PC-3 (cell line): ENCODE measurements at regions of chr17 and their contacts with region 1.

Region 1: DNA sequence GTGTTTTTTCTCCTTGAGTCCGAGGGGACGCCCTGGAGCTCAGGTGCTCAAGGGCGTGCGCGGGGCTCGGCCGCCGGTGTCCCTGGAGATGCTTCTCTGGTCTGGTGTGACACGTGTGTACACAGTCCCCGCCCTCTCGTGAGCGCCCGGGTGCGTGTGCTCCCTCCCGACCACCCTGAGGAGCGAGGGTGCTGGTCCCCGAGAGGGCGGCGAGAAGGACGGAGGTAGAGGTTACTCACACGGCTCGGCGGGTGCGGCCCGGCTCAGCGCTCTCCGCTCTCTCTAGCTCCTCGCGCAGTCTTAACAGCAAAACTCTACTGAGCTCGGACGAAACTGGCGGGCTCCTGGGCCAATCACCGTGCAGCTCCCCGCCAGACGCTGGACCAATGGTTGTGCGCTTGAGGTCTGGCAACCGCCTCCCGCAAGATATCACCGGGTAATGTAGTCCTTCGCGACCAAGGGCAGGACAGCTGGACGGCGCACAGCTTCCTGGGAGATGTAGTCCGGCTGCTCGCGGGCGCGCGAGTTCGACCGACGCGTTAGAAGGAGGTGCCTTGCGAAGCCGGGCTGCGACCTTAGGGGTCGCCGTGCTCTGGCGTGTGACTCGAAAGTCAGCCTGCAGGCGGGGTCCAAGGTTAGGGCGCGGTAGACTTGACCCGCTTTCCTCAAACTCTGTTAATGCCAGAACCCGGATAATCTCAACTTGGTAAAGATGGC is at the start of gene SLC25A19:
- DNase-seq: peak; percentile 99
- ATAC-seq: peak; percentile 97
- H3K4me3 ChIP-seq: peak within 1 kb of the TSS; percentile 82
- H3K27ac ChIP-seq: peak within 1 kb of the TSS; percentile 68
- H3K4me1 ChIP-seq: peaks cover 12% of the 10 kb centered on the region
- H3K27me3 ChIP-seq: no peaks in the 10 kb centered on the region
- CTCF ChIP-seq: no peak
- total RNA-seq, gene SLC25A19: 75.0 and 76.9 TPM in 2 replicates

Region 2: DNA sequence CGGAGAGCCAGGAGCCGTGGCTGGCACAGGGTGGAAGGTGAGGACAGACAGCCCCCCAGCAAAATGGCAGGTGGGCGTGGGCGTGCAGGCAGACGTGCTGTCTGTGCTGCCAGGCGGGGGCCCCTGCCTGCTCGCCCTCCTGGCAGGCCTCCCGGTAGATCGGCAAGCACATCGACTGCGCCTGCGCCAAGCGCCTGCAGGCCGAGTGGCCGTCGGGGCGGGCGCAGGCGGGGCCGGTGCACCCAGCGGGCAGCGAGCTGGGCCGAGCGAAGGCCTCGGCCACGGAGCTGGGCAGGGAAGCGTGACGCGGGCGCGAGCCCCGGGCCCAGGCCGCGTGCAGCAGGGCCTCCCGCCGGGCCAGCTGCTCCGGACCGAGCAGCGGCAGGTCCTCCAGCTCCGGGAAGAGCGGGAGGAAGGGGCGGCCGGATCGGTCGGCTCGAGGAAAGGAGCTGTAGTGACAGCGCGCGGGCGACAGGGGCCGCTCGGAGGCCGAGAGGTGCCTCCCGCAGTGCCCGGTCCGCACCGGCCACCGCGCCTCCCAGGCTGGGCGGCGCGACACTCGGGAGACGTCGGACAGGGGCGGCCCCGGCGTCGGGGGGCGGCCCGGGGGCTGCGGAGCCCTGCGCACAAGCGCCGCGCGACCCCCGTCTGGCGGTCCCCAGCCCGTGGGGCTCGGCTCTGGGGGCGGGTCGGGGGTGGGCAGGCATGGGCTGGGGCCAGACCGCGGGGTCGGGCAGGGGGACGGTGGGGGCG is 446.5 kb before region 1 on chr17:
- CTCF ChIA-PET with region 1: no interaction called
- POLR2A ChIA-PET with region 1: no interaction called
- intact Hi-C with region 1: no loop called
- DNase-seq: peak; percentile 82
- ATAC-seq: peak; percentile 90
- H3K4me3 ChIP-seq: peak overlapping the region; percentile 71
- H3K27ac ChIP-seq: no peak overlapping the region
- H3K4me1 ChIP-seq: peaks cover 6% of the 10 kb centered on the region; the same call in 1 of the 2 replicates
- H3K27me3 ChIP-seq: no peaks in the 10 kb centered on the region
- CTCF ChIP-seq: peak; percentile 61

Region 3: GRCh38 chr17:75159191-75160031 is 129.9 kb before region 1 on chr17:
- CTCF ChIA-PET with region 1: no interaction called
- POLR2A ChIA-PET with region 1: no interaction called
- intact Hi-C with region 1: no loop called
- DNase-seq: peak; percentile 98
- ATAC-seq: peak; percentile 64
- H3K4me3 ChIP-seq: peak overlapping the region; percentile 16; the same call in 1 of the 2 replicates
- H3K27ac ChIP-seq: peak overlapping the region; percentile 96
- H3K4me1 ChIP-seq: peaks cover 47% of the 10 kb centered on the region
- H3K27me3 ChIP-seq: no peaks in the 10 kb centered on the region
- CTCF ChIP-seq: no peak

Region 4: DNA sequence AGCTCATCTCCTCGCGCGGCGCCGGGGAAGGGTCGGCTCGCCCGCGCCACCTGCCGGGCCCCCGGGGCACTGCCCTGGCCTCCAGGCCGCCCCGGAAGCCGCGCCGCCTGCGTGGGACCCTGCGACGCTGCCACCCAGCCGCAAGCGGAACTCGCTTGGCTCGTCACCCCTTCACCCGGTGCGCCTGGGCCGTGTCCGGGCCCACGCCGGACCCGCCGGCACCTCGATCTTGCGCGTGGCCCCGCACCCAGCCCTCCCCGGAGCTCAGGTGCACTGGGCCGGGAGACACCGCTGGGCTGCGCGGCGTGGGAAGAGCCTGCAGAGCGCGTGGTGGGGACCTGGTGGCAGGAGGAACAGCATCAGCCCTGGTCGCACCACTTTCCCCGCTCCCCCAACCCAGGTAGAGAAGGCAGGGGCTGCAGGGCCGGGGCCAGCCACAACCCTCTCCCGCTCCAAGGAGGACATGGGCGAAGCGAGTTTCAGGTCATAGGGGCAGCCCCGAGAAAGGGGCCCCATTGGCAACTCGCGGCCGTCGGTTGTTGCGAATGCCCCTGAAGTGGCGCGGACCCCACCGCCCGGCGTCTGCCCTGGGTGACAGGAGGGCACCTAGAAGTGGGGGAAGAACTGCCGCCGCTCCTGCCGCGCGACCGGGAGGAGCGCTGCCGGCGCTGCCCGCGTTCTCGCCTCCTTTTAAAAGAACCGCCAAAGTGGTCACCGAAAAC is 17.9 kb before region 1 on chr17:
- CTCF ChIA-PET with region 1: interaction called, 60 read pairs
- POLR2A ChIA-PET with region 1: interaction called, 23 read pairs
- intact Hi-C with region 1: loop called (anchors 1 kb)
- DNase-seq: peak; percentile 90
- ATAC-seq: peak; percentile 53
- H3K4me3 ChIP-seq: peak overlapping the region; percentile 73
- H3K27ac ChIP-seq: peak overlapping the region; percentile 36
- H3K4me1 ChIP-seq: peaks cover 20% of the 10 kb centered on the region
- H3K27me3 ChIP-seq: no peaks in the 10 kb centered on the region
- CTCF ChIP-seq: peak; percentile 57

Region 5: GRCh38 chr17:75319904-75320691 is 30.8 kb after region 1 on chr17:
- CTCF ChIA-PET with region 1: interaction called, 10 read pairs
- POLR2A ChIA-PET with region 1: no interaction called
- intact Hi-C with region 1: no loop called
- DNase-seq: no peak
- ATAC-seq: no peak
- H3K4me3 ChIP-seq: no peak overlapping the region
- H3K27ac ChIP-seq: no peak overlapping the region
- H3K4me1 ChIP-seq: no peaks in the 10 kb centered on the region
- H3K27me3 ChIP-seq: no peaks in the 10 kb centered on the region
- CTCF ChIP-seq: no peak

Region 6: GRCh38 chr17:75345514-75346167 is 56.4 kb after region 1 on chr17:
- CTCF ChIA-PET with region 1: no interaction called
- POLR2A ChIA-PET with region 1: no interaction called
- intact Hi-C with region 1: no loop called
- DNase-seq: no peak
- ATAC-seq: no peak
- H3K4me3 ChIP-seq: no peak overlapping the region
- H3K27ac ChIP-seq: no peak overlapping the region
- H3K4me1 ChIP-seq: no peaks in the 10 kb centered on the region
- H3K27me3 ChIP-seq: no peaks in the 10 kb centered on the region
- CTCF ChIP-seq: no peak

Region 7: DNA sequence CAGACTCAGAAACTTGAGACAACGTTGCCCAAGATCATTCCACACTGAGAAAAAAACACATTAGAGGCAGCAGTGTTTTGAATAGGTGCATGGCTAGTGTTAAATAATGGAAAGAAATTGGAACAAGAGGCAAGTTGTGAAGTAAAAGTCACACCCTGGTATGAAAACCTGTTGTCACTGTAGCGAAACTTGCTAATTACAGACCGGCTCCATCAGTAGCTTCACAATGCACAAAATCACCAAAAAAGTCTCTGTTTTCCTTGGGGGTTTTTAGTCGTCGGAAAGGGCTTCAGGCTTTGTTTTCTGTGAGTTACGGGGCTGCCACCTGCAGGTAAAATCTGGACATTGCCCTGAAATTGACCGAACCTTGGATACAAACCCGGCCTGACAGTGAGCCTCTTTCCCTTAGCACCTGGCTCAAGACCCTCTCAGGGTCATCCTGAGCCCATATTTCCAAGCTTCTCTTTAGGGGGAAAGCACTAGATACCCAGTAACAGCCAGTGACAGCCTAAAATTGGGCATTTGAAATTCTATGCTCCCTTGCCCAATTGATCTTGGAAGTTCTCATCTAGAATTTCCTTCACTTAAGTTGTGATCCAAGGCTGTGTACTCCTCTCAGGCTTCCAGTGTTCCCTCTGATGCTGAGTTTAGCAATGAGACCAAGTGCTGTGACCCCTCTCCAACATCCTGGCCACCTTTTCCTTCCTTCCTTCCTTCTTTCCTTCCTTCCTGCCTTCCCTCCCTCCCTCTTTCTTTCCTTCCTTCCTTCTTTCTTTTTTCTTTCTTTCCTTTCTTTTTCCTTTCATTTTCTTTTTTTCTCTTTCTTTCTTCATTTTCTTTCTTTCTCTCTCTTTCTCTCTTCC is 123.4 kb after region 1 on chr17:
- CTCF ChIA-PET with region 1: interaction called, 11 read pairs
- POLR2A ChIA-PET with region 1: no interaction called
- intact Hi-C with region 1: no loop called
- DNase-seq: peak; percentile 88
- ATAC-seq: peak; percentile 84
- H3K4me3 ChIP-seq: peak overlapping the region; percentile 42
- H3K27ac ChIP-seq: no peak overlapping the region
- H3K4me1 ChIP-seq: 0 out of 2 replicates have a peak, but pooled peaks cover 3% of the 10 kb centered on the region
- H3K27me3 ChIP-seq: no peaks in the 10 kb centered on the region
- CTCF ChIP-seq: peak; percentile 91

Region 8: GRCh38 chr17:75440738-75441448 is 151.6 kb after region 1 on chr17:
- CTCF ChIA-PET with region 1: no interaction called
- POLR2A ChIA-PET with region 1: no interaction called
- intact Hi-C with region 1: no loop called
- DNase-seq: no peak
- ATAC-seq: no peak
- H3K4me3 ChIP-seq: no peak overlapping the region
- H3K27ac ChIP-seq: no peak overlapping the region
- H3K4me1 ChIP-seq: no peaks in the 10 kb centered on the region
- H3K27me3 ChIP-seq: no peaks in the 10 kb centered on the region
- CTCF ChIP-seq: no peak